ENCODE measurements at regions of chr6 and their contacts with region 1.

Region 1: DNA sequence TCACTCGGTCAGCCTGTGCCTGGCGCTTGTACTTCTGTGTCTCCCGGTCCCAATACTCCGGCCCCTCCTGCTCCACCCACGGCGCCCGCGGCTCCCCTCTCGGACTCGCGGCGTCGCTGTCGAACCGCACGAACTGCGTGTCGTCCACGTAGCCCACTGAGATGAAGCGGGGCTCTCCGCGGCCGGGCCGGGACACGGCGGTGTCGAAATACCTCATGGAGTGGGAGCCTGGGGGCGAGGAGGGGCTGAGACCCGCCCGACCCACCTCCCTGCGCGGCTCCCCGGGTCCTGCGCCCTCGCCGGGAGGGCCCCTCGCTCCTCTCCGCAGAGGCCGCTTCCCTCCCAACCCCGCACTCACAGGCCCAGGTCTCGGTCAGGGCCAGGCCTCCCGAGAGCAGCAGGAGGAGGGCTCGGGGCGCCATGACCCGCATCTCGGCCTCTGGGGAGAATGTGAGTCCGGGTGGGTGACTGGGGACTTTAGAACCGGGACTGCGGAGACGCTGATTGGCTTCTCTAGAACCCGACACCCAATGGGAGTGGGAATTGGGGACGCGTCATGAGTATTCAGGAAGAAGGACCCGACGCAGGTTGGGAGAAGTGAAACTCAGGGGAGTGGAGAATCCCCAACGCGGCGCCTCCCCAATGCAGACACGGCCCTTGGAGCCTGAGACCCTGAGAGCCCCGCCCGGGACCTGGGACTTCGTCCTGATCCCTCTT is at the start of gene HLA-C:
- DNase-seq: peak; percentile 98
- H3K4me3 ChIP-seq: peak within 1 kb of the TSS; percentile 57 to 94 (median 78)
- H3K27ac ChIP-seq: peak within 1 kb of the TSS; percentile 78 to 99 (median 96)
- H3K4me1 ChIP-seq: peaks cover 0 to 22% (median 11%) of the 10 kb centered on the region in 4 donors
- H3K27me3 ChIP-seq: no peaks in the 10 kb centered on the region
- CTCF ChIP-seq: peak in 1 of 3 experiments; percentile 21
- EP300 ChIP-seq: no peak
- POLR2A ChIP-seq: peak; percentile 67
- total RNA-seq, gene HLA-C: 251 to 549 (median 296) TPM

Region 2: DNA sequence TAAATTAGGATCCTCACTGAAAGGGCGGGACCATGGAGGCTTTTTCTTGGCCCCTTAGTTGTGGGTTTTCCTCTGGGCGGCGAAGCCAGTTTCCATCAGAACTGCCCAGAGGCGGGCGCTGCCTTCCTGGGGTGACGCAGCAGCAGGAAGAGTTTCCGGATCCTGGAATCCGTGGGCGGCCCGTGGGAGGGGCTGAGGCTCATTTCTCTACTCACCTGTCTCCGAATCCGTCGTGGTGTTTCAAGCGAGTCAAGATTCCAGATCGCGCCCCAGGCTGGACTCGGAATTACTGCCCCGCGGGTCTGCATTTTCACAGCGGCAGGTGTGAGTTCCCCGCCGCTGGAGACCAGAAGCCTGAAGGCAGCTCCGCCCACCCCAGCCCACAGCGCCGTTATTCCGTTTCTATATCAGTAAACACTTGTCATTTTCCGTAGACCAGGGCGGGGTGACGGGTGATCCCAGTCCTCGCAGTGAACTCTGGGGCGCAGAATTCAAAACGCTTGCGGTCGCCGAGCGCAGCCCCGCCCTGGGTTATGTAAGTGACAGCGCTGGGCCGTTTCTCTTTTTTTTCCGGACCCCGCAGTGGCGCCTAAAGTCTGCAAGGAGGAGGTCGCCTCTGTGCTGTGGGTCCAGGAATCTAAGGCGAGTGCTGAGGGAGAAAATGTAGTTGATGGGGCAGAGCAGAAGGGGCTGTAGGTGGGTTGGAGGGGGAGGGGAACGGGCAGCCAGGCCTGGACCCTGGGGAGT is 74.1 kb before region 1 on chr6:
- intact Hi-C with region 1: loop called (anchors 5 kb)
- DNase-seq: peak; percentile 98
- H3K4me3 ChIP-seq: peak overlapping the region; percentile 66 to 85 (median 70)
- H3K27ac ChIP-seq: peak overlapping the region; percentile 92 to 97 (median 93)
- H3K4me1 ChIP-seq: peaks cover 18 to 48% (median 37%) of the 10 kb centered on the region in 4 donors
- H3K27me3 ChIP-seq: no peaks in the 10 kb centered on the region
- CTCF ChIP-seq: peak in 1 of 3 experiments; percentile 4
- EP300 ChIP-seq: no peak
- POLR2A ChIP-seq: peak; percentile 88

Region 3: DNA sequence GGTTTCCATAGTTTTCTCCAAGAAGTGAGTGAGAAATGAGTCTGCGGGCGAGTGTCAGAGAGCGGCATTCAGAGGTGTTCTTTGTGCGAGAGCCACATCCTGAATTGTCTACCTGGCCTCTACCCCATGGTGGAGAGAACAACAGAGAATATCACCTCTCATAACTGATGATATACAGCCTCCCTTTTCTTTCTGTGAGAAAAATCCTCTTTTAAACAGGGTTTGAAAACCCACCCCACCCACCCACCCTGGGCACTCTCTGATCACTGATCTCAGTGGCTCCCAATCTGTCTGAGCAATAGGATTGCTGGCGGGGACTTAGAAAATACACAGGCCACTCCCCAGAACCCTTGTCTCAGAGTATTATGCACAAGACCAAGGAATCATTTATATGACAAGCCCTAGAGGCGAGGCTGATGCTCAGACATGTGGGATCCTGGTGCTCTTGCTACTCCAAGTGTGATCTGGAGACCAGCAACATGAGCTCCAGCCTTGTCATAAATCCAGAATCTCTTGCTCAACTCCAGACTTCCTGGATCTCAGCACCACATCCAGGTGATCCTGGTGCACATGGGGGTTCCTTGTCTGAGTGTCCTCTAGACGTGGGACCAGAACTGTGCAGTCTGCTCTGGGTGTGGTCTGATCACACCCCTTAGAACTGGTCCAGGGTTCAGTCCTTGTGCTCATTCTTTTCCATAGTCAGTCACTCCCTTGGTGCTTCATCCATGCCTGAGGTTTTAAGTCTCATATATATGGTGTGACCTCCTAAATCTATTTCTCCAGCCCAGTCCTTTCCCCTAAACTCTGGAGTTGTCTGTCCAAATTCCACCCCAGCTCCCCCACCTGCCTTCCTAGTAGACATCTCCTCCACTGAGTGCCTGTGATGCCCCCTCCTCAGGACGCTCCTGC is 79.9 kb after region 1 on chr6:
- intact Hi-C with region 1: loop called (anchors 5 kb)
- DNase-seq: peak; percentile 91
- H3K4me3 ChIP-seq: no peak overlapping the region
- H3K27ac ChIP-seq: no peak overlapping the region
- H3K4me1 ChIP-seq: peaks cover 8 to 20% (median 14%) of the 10 kb centered on the region in 4 donors
- H3K27me3 ChIP-seq: no peaks in the 10 kb centered on the region
- CTCF ChIP-seq: no peak
- EP300 ChIP-seq: no peak
- POLR2A ChIP-seq: no peak

Region 4: GRCh38 chr6:31465718-31466117 is 193.9 kb after region 1 on chr6:
- intact Hi-C with region 1: no loop called
- DNase-seq: no peak
- H3K4me3 ChIP-seq: no peak overlapping the region
- H3K27ac ChIP-seq: no peak overlapping the region
- H3K4me1 ChIP-seq: peaks cover 5 to 27% (median 14%) of the 10 kb centered on the region in 4 donors
- H3K27me3 ChIP-seq: no peaks in the 10 kb centered on the region
- CTCF ChIP-seq: no peak
- EP300 ChIP-seq: no peak
- POLR2A ChIP-seq: no peak

Region 5: DNA sequence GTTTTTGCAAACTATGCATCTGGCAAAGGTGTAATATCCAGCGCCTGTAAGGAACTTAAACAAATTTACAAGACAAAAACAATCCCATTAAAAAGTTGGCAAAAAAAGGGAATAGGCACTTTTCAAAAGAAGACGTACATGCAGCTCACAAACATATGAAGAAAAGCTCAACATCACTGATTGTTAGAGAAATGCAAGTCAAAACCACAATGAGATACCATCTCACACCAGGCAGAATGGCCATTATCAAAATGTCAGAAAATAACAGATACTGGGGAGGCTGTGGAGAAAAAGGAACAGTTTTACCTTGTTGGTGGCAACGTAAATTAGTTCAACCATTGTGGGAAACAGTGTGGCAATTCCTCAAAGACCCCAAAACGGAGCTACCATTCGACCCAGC is 1045.7 kb after region 1 on chr6:
- intact Hi-C with region 1: no loop called
- DNase-seq: no peak
- H3K4me3 ChIP-seq: no peak overlapping the region
- H3K27ac ChIP-seq: no peak overlapping the region
- H3K4me1 ChIP-seq: no peaks in the 10 kb centered on the region
- H3K27me3 ChIP-seq: no peaks in the 10 kb centered on the region
- CTCF ChIP-seq: no peak
- EP300 ChIP-seq: no peak
- POLR2A ChIP-seq: no peak

Measured in esophagus muscularis mucosa (tissue), 4 donors.